ENCODE measurements at regions of chr16 and their contacts with region 1.

Region 1: GRCh38 chr16:73663720-73664119 is 615.8 kb upstream of the ZFHX3 start:
- DNase-seq: no peak
- ATAC-seq: no peak
- H3K4me3 ChIP-seq: no peak overlapping the region
- H3K27ac ChIP-seq: no peak overlapping the region
- H3K4me1 ChIP-seq: no peaks in the 10 kb centered on the region
- H3K27me3 ChIP-seq: no peaks in the 10 kb centered on the region

Region 2: GRCh38 chr16:72523087-72523486 is 1140.6 kb before region 1 on chr16:
- intact Hi-C with region 1: loop called in 1 of 2 experiments (anchors 10 kb)
- DNase-seq: no peak
- ATAC-seq: no peak
- H3K4me3 ChIP-seq: no peak overlapping the region
- H3K27ac ChIP-seq: no peak overlapping the region
- H3K4me1 ChIP-seq: no peaks in the 10 kb centered on the region
- H3K27me3 ChIP-seq: no peaks in the 10 kb centered on the region